Heart right ventricle (tissue), 16 donors: ENCODE measurements at regions of chr1 and their contacts with region 1.

Region 1: GRCh38 chr1:57072401-57073110 is 106.7 kb upstream of the C8B start:
- DNase-seq: no peak
- ATAC-seq: no peak
- H3K4me3 ChIP-seq: no peak overlapping the region
- H3K27ac ChIP-seq: no peak overlapping the region
- H3K4me1 ChIP-seq: peaks cover 0 to 18% (median 3%) of the 10 kb centered on the region in 9 donors
- H3K27me3 ChIP-seq: no peaks in the 10 kb centered on the region
- CTCF ChIP-seq: no peak

Region 2: DNA sequence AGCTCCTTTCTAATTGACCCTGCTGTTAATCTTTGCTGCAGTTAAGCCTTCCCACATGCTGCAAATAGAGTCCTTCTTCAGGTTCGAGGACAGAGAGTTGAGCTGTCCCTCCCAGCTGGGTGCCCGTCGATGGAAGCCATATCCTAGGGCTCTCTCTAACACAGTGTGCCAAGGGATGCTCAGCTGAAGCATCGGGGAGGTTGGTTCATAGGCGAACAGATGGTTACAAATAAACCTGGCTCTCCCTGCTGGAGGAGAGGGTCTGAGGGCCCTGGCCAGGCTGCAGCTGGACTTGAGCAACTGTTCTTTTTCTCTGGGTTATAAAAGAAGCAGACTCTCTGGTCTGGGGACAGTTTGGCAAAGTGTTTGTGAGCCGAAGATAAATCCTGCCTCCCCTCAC is 13.6 kb after region 1 on chr1:
- intact Hi-C with region 1: loop called in 1 of 10 experiments (anchors 1 kb)
- DNase-seq: no peak
- ATAC-seq: no peak
- H3K4me3 ChIP-seq: no peak overlapping the region
- H3K27ac ChIP-seq: no peak overlapping the region
- H3K4me1 ChIP-seq: peaks cover 0 to 54% (median 17%) of the 10 kb centered on the region in 9 donors
- H3K27me3 ChIP-seq: no peaks in the 10 kb centered on the region
- CTCF ChIP-seq: no peak

Region 3: GRCh38 chr1:57319165-57319564 is 246.6 kb after region 1 on chr1:
- intact Hi-C with region 1: no loop called
- DNase-seq: no peak
- ATAC-seq: no peak
- H3K4me3 ChIP-seq: no peak overlapping the region
- H3K27ac ChIP-seq: no peak overlapping the region
- H3K4me1 ChIP-seq: peaks cover 0 to 6% (median 0%) of the 10 kb centered on the region in 9 donors
- H3K27me3 ChIP-seq: no peaks in the 10 kb centered on the region
- CTCF ChIP-seq: no peak

Region 4: DNA sequence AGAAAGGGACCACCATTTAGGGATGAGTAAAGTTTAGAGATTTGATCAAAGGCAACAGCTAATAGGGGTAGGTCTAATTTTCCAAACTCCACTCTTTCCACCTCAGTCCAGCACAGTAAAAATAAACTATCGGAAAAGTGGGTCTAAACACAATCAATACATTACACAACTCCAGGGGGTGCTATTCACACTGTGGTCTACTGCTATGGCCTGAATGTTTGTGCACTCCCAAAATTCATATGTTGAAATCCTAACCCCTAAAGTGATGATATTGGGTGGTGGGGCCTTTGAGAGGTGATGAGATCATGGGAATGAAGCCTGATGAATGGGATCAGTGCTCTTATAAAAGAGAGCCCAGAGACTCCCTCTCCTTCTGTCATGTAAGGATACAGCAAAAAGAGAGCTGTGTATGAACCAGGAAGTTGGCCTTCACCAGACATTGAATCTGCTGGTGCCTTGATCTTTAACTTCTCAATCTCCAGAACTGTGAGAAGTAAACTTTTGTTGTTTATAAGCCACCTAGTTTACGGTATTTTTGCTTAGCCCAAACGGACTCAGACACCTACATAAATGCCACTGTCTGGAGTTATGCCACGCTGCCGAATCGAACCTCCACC is 1280.0 kb after region 1 on chr1:
- intact Hi-C with region 1: no loop called
- DNase-seq: no peak
- ATAC-seq: no peak
- H3K4me3 ChIP-seq: no peak overlapping the region
- H3K27ac ChIP-seq: no peak overlapping the region
- H3K4me1 ChIP-seq: peaks cover 0 to 16% (median 0%) of the 10 kb centered on the region in 9 donors
- H3K27me3 ChIP-seq: no peaks in the 10 kb centered on the region
- CTCF ChIP-seq: no peak